AG04449 (cell line): ENCODE measurements at regions of chr14 and their contacts with region 1.

Region 1: GRCh38 chr14:102235275-102235897 is 69.6 kb downstream of the MOK start:
- DNase-seq: peak; percentile 34
- H3K4me3 ChIP-seq: peak overlapping the region; percentile 23
- CTCF ChIP-seq: peak; percentile 83

Region 2: GRCh38 chr14:102304611-102305509 is 69.5 kb after region 1 on chr14 and contains the start of gene MOK:
- CTCF ChIA-PET with region 1: interaction called, 14 read pairs
- POLR2A ChIA-PET with region 1: no interaction called
- DNase-seq: peak; percentile 70
- H3K4me3 ChIP-seq: peak within 1 kb of the TSS; percentile 84
- CTCF ChIP-seq: no peak